ENCODE measurements at regions of chr22 and their contacts with region 1.

Region 1: GRCh38 chr22:20981787-20982562 is at the start of gene LZTR1:
- DNase-seq: peak; percentile 90
- CTCF ChIP-seq: peak; percentile 67

Region 2: GRCh38 chr22:20777420-20778177 is 204.4 kb before region 1 on chr22:
- CTCF ChIA-PET with region 1: no interaction called
- POLR2A ChIA-PET with region 1: no interaction called
- DNase-seq: no peak
- CTCF ChIP-seq: no peak

Region 3: DNA sequence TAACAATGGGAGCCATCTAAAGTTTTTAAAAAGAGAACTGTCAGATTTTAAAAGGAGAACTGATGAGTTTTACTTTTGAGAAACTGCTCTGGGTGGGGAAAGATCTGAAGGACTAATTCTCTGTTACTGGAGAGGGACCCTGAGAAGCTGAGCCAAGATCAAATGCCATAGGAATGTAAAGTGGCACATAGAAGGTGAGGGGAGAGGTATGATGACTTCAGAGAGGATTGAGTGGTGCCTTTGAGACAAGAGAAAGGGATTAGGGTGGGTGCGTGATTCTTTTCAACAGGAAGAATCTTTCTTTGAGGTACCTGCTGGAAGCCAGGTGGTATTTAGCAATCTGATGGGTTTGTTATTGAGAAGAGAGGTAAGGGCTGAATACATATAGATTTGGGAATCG is 55.7 kb before region 1 on chr22:
- CTCF ChIA-PET with region 1: interaction called, 3 read pairs
- POLR2A ChIA-PET with region 1: interaction called, 13 read pairs
- DNase-seq: no peak
- CTCF ChIP-seq: no peak

Region 4: GRCh38 chr22:20957316-20958101 is 24.5 kb before region 1 on chr22:
- CTCF ChIA-PET with region 1: interaction called, 14 read pairs
- POLR2A ChIA-PET with region 1: no interaction called
- DNase-seq: peak; percentile 73
- CTCF ChIP-seq: no peak

Region 5: GRCh38 chr22:20965104-20965887 is 16.7 kb before region 1 on chr22:
- CTCF ChIA-PET with region 1: interaction called, 14 read pairs
- POLR2A ChIA-PET with region 1: no interaction called
- DNase-seq: no peak
- CTCF ChIP-seq: no peak

Region 6: DNA sequence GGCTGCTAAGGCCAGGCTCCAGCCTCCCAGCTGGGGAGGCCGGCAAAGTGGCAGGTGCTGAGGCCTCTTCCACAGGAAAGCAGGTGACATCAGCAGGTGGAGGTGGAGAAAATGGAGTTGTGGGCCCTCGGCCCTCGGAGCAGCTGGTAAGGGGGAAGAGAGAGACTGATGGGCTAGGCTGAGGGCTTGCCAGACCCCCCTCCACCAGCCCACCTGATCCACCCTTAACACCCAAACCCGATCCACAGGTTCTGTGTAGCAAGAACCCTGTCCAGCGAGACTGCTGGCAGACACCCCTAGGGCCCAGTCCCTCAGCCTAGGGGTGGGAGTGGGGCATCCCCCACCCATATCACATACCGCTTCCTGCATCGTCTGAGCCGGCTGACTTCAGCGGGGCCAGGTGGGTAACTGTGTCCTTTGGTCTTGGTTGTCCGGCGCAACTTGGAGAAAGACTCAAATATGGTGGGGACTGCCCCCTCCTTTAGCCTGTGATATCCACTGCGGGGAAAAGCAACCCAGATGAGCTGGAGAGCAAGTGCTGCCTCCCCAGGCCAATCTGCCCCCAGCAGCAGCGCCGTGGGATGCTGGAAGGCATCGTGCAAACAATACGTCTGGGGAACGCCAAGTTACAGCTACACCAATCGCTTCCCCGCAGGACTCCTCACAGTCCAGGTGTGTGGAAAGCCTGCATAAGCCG is 18.5 kb after region 1 on chr22:
- CTCF ChIA-PET with region 1: interaction called, 10 read pairs
- POLR2A ChIA-PET with region 1: interaction called, 7 read pairs
- DNase-seq: no peak
- CTCF ChIP-seq: no peak

Region 7: DNA sequence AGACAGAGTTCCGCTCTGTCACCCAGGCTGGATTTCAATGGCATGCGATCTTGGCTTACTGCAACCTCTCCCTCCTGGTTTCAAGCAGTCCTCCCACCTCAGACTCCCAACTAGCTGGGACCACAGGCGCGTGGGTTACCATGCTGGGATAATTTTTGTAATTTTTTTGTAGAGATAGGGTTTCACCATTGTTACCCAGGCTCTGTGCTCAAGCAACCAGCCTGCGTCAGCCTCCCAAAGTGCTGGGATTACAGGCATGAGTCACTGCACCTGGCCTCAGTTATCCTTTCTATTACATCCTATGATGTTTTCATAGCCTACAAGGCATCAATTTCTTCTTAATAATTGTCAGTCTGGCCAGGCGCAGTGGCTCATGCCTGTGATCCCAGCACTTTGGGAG is 100.3 kb after region 1 on chr22:
- CTCF ChIA-PET with region 1: no interaction called
- POLR2A ChIA-PET with region 1: no interaction called
- DNase-seq: no peak
- CTCF ChIP-seq: no peak